ENCODE measurements at regions of chr1 and their contacts with region 1.

Region 1: DNA sequence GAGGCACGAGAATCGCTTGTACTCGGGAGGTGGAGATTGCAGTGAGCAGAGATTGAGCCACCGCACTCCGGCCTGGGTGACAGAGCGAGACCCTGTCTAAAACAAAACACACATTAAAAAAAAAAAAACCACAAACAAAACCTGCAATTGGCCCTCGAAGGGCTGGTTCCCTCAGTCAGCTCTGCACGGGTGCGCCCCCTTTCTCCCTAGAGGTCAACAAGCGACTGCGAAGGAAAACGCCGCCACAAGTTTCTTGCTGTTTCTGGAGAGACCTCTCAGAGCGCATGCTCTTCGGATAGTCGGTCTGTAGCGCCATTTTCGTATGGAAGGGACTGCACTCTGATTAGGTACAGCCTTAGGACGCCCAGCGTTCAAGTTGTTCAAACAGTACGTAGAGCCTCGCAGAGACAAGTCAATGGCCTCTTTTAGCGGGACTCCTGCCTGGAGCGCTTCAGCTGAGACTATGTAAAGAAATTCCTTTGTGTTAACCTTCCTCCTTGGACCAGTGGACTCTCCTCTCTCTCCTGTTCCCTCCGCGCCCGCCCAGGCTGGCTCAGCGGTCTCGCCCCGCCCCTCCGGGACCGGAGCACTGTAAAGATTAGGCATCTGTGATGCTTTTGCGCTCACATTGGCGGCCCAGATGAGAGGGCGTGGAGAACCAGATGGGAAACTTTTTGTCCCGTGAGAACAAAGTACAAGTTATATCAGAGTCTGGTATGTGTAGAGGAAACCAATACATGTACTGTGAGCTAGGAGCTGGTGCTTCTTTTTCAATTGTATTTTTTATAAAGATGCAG is 1.0 kb upstream of the CDC14A start:
- DNase-seq: peak; percentile 67 to 94 (median 85)
- ATAC-seq: peak; percentile 70
- H3K4me3 ChIP-seq: peak overlapping the region; percentile 76 to 88
- H3K4me3 Mint-ChIP-seq: peak overlapping the region; percentile 99
- H3K27ac ChIP-seq: peak overlapping the region; percentile 80 to 86
- H3K27ac Mint-ChIP-seq: peak overlapping the region; percentile 99
- H3K4me1 ChIP-seq: peaks cover 25% of the 10 kb centered on the region
- H3K4me1 Mint-ChIP-seq: peaks cover 36% of the 10 kb centered on the region
- H3K27me3 ChIP-seq: no peaks in the 10 kb centered on the region
- H3K27me3 Mint-ChIP-seq: no peaks in the 10 kb centered on the region
- CTCF ChIP-seq: no peak

Region 2: GRCh38 chr1:99992760-99993467 is 358.4 kb before region 1 on chr1:
- CTCF ChIA-PET with region 1: no interaction called
- POLR2A ChIA-PET with region 1: no interaction called
- intact Hi-C with region 1: no loop called
- DNase-seq: no peak
- ATAC-seq: no peak
- H3K4me3 ChIP-seq: no peak overlapping the region
- H3K4me3 Mint-ChIP-seq: no peak overlapping the region
- H3K27ac ChIP-seq: no peak overlapping the region
- H3K27ac Mint-ChIP-seq: no peak overlapping the region
- H3K4me1 ChIP-seq: no peaks in the 10 kb centered on the region
- H3K4me1 Mint-ChIP-seq: no peaks in the 10 kb centered on the region
- H3K27me3 ChIP-seq: no peaks in the 10 kb centered on the region
- H3K27me3 Mint-ChIP-seq: no peaks in the 10 kb centered on the region
- CTCF ChIP-seq: no peak

Region 3: DNA sequence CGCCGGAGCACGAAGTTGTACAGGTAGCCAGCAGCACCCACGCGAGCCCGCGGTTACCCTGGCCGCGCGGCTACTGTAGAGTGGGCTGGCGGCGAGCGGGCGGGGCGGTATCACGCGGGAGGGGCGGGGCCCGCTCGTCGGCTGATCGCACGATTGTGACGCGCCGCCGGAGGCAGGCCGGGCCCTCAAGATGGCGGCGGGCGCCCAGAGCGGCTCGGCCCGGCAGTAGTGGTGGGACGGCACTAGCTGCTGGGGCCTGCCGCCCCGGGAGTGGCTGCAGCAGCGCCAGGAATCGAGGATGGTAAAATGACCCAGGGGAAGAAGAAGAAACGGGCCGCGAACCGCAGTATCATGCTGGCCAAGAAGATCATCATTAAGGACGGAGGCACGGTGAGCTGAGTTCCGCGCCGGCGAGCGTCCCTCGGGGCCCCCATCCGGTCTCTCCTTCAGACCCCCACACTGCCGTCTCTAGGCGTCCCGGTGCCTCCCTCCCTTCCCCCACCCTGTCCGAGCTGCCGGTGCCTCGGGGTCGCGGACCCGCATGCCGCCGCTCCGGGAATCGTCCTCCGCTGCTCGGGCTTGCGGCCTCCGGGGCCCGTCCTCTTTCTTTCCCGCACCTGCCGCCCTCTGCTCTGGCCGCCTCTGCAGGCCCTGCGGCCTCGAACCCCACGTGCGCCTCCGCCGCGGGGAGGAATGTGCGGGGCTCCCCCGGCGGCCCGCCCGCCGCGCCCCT is 313.2 kb before region 1 on chr1:
- CTCF ChIA-PET with region 1: no interaction called
- POLR2A ChIA-PET with region 1: interaction called, 4 read pairs
- intact Hi-C with region 1: loop called in 1 of 2 experiments (anchors 1 kb)
- DNase-seq: peak; percentile 77 to 95 (median 87)
- ATAC-seq: peak; percentile 78
- H3K4me3 ChIP-seq: peak overlapping the region; percentile 85 to 94
- H3K4me3 Mint-ChIP-seq: peak overlapping the region; percentile 97
- H3K27ac ChIP-seq: peak overlapping the region; percentile 94 to 99
- H3K27ac Mint-ChIP-seq: peak overlapping the region; percentile 98
- H3K4me1 ChIP-seq: peaks cover 43% of the 10 kb centered on the region
- H3K4me1 Mint-ChIP-seq: peaks cover 52% of the 10 kb centered on the region
- H3K27me3 ChIP-seq: no peaks in the 10 kb centered on the region
- H3K27me3 Mint-ChIP-seq: no peaks in the 10 kb centered on the region
- CTCF ChIP-seq: no peak

Region 4: GRCh38 chr1:100265931-100266740 is 85.2 kb before region 1 on chr1 and contains the start of gene RTCA:
- CTCF ChIA-PET with region 1: interaction called, 5 read pairs
- POLR2A ChIA-PET with region 1: interaction called, 12 read pairs
- intact Hi-C with region 1: loop called (anchors 1 to 5 kb)
- DNase-seq: peak; percentile 85 to 98 (median 97)
- ATAC-seq: peak; percentile 94
- H3K4me3 ChIP-seq: peak within 1 kb of the TSS; percentile 80 to 94
- H3K4me3 Mint-ChIP-seq: peak within 1 kb of the TSS; percentile 100
- H3K27ac ChIP-seq: peak within 1 kb of the TSS; percentile 68 to 78
- H3K27ac Mint-ChIP-seq: peak within 1 kb of the TSS; percentile 98
- H3K4me1 ChIP-seq: peaks cover 29% of the 10 kb centered on the region
- H3K4me1 Mint-ChIP-seq: peaks cover 47% of the 10 kb centered on the region
- H3K27me3 ChIP-seq: no peaks in the 10 kb centered on the region
- H3K27me3 Mint-ChIP-seq: no peaks in the 10 kb centered on the region
- CTCF ChIP-seq: no peak
- total RNA-seq, gene RTCA: 36.2 to 37.7 TPM

Region 5: DNA sequence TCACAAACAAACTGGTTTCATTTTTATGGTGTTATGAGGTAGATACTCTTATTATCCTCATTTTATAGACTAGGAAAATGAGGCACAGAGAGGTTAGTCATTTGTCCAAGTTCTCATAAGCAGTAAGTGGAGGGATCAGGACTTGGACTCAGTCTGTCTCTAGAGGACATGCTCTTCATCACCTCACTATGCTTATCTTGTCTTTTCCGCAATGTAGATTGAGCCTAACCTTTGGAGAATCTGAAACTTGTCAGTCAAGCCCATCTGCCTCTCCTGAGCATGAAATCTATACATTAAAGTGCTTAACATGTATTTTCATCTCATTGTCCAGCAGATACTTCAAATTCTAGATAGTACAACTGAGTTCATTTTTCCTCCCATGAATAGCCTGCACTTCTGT is 10.8 kb before region 1 on chr1:
- CTCF ChIA-PET with region 1: no interaction called
- POLR2A ChIA-PET with region 1: no interaction called
- intact Hi-C with region 1: no loop called
- DNase-seq: no peak
- ATAC-seq: no peak
- H3K4me3 ChIP-seq: no peak overlapping the region
- H3K4me3 Mint-ChIP-seq: no peak overlapping the region
- H3K27ac ChIP-seq: no peak overlapping the region
- H3K27ac Mint-ChIP-seq: no peak overlapping the region
- H3K4me1 ChIP-seq: no peaks in the 10 kb centered on the region
- H3K4me1 Mint-ChIP-seq: no peaks in the 10 kb centered on the region
- H3K27me3 ChIP-seq: no peaks in the 10 kb centered on the region
- H3K27me3 Mint-ChIP-seq: peaks cover 3% of the 10 kb centered on the region
- CTCF ChIP-seq: no peak

Region 6: DNA sequence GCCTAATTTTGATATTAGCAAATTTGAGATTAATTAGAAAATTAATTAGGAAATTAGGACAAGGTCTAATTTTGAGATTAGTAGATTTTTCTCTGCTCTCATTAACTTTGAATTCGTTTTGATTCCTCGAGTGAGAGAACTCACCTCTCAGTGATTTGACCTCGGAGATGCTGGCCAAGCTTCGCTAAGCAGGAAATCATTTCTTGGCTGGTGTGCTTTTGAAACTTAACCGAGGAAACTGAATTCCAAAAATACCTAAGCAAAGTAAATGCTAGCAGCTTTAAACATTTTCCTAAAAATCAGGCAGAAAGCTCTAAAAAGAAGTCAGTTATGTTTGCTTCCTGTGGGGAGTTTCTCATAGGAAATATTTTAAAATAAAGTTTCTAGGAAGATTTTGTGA is 35.9 kb after region 1 on chr1:
- CTCF ChIA-PET with region 1: interaction called, 16 read pairs
- POLR2A ChIA-PET with region 1: interaction called, 24 read pairs
- intact Hi-C with region 1: loop called (anchors 2 to 5 kb)
- DNase-seq: peak in 1 of 9 experiments; percentile 43
- ATAC-seq: no peak
- H3K4me3 ChIP-seq: peak overlapping the region; percentile 3 to 6
- H3K4me3 Mint-ChIP-seq: peak overlapping the region; percentile 76
- H3K27ac ChIP-seq: peak overlapping the region; percentile 22 to 65
- H3K27ac Mint-ChIP-seq: peak overlapping the region; percentile 88
- H3K4me1 ChIP-seq: peaks cover 61% of the 10 kb centered on the region
- H3K4me1 Mint-ChIP-seq: peaks cover 88% of the 10 kb centered on the region
- H3K27me3 ChIP-seq: no peaks in the 10 kb centered on the region
- H3K27me3 Mint-ChIP-seq: no peaks in the 10 kb centered on the region
- CTCF ChIP-seq: no peak

Region 7: GRCh38 chr1:100423832-100424337 is 72.6 kb after region 1 on chr1:
- CTCF ChIA-PET with region 1: interaction called, 4 read pairs
- POLR2A ChIA-PET with region 1: interaction called, 27 read pairs
- intact Hi-C with region 1: no loop called
- DNase-seq: peak in 5 of 9 experiments; percentile 13 to 47 (median 31)
- ATAC-seq: peak; percentile 75
- H3K4me3 ChIP-seq: peak overlapping the region in 1 of 2 experiments; percentile 33
- H3K4me3 Mint-ChIP-seq: peak overlapping the region; percentile 75
- H3K27ac ChIP-seq: peak overlapping the region; percentile 2 to 44
- H3K27ac Mint-ChIP-seq: peak overlapping the region; percentile 89
- H3K4me1 ChIP-seq: peaks cover 31% of the 10 kb centered on the region
- H3K4me1 Mint-ChIP-seq: peaks cover 74% of the 10 kb centered on the region
- H3K27me3 ChIP-seq: no peaks in the 10 kb centered on the region
- H3K27me3 Mint-ChIP-seq: no peaks in the 10 kb centered on the region
- CTCF ChIP-seq: no peak

Region 8: DNA sequence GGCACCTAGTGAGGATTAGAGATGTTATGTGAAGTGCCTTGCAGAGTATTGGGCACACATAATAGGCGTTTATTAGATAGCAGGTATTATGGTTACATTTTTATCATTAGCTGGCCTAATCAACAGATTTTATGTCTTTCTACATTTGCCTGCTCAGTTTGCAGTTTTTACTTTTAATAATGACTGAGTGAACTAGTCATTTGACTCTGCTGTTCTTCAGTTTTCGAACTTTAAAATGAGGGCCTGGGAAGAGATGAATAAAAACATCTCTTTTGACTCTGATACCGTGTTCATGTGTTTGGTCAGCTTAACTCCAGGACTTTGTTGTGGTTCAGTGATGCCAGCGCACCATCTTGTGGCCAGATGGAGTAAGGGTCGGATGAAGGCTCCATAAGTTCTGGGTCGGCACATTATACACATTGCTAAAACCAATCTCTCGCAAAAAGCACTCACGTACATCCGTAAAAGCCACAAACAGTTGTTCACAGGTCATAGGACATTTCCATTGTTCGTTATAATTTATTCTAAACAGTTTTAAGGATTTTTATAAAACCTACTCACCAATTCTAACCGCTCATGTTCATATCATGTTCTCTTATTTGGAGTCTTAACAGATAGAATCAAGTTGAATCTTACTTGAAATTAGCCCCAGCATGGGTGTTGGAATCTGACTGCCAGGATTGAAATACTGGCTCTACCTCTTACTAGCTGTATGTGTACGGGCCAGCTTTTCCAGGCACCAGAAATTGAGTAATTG is 108.2 kb after region 1 on chr1:
- CTCF ChIA-PET with region 1: interaction called, 82 read pairs
- POLR2A ChIA-PET with region 1: interaction called, 9 read pairs
- intact Hi-C with region 1: loop called (anchors 1 to 5 kb)
- DNase-seq: peak; percentile 42 to 85 (median 61)
- ATAC-seq: peak; percentile 69
- H3K4me3 ChIP-seq: no peak overlapping the region
- H3K4me3 Mint-ChIP-seq: peak overlapping the region; percentile 8
- H3K27ac ChIP-seq: no peak overlapping the region
- H3K27ac Mint-ChIP-seq: peak overlapping the region; percentile 29
- H3K4me1 ChIP-seq: peaks cover 17% of the 10 kb centered on the region
- H3K4me1 Mint-ChIP-seq: peaks cover 55% of the 10 kb centered on the region
- H3K27me3 ChIP-seq: no peaks in the 10 kb centered on the region
- H3K27me3 Mint-ChIP-seq: no peaks in the 10 kb centered on the region
- CTCF ChIP-seq: peak; percentile 57

Measured in CD8-positive, alpha-beta T cell (primary cell).